ENCODE measurements at regions of chr13 and their contacts with region 1.

Region 1: DNA sequence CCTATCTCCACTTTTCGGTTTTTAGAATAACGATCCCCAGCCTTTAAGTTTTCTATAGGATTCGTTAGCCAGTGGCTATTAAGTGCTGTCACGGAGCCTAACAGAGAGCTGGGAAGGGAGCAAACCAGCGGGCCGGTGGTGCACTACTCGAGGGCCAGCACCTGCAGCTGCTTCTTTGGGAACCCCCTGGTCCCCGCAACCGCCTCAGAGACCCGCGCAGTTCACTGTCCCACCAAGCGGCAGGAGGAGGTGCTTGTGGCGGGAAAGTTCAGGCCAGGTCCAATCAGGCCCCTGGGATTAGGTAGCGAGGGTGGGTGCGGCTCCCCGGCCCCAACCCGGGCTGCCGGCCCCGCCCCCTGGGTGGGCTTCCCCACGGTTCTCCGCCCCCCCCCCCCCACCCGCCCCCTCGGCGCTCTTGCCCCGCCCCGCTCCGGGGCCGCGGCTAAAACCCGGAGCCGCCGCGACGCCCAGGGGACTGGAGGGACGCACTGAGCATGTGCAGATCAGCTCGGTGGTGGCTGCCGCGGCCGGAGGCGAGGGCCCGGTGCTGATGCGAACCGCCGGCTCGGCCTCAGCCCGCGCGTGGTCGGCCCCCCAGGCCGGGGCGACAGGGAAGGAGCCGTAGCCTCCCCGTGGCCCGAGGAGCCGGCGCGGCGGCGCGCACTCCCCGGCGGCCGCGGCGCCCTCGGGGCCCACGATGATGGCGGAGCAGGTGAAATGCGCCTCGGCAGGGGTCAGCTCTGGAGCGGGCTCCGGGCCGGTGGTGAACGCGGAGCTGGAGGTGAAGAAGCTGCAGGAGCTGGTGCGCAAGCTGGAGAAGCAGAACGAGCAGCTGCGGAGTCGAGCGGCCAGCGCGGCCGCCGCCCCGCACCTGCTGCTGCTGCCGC is at the start of gene SLAIN1:
- DNase-seq: peak; percentile 71
- H3K4me3 Mint-ChIP-seq: peak within 1 kb of the TSS; percentile 95
- H3K27ac Mint-ChIP-seq: peak within 1 kb of the TSS; percentile 47
- H3K4me1 Mint-ChIP-seq: peaks cover 38% of the 10 kb centered on the region
- H3K27me3 Mint-ChIP-seq: peaks cover 26% of the 10 kb centered on the region
- total RNA-seq, gene SLAIN1: 36.3 and 43.3 TPM in 2 replicates

Region 2: GRCh38 chr13:77026818-77027585 is 670.5 kb before region 1 on chr13 and contains the start of gene FBXL3:
- intact Hi-C with region 1: loop called (anchors 1 kb)
- DNase-seq: peak; percentile 78
- H3K4me3 Mint-ChIP-seq: peak within 1 kb of the TSS; percentile 94
- H3K27ac Mint-ChIP-seq: peak within 1 kb of the TSS; percentile 93
- H3K4me1 Mint-ChIP-seq: peaks cover 58% of the 10 kb centered on the region
- H3K27me3 Mint-ChIP-seq: no peaks in the 10 kb centered on the region
- total RNA-seq, gene FBXL3: 40.1 and 40.8 TPM in 2 replicates

Region 3: DNA sequence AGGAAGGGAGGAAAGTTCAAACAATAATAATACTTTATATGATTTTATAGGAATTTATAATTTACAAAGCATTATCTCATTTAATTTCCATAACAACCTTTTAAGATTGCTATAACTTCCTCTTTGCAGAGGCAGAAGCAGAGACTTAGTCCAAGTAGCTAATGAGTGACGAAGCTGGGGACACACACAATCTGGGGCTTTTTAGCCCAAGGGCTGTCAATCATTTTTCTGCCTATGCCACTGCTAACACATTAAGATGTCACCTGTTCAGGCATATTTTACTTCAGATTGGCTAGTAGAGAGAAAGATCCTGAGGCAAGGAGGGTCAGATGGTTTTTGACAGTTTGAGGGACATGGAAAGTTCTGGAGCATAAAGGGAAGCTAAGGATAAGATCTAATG is 149.4 kb before region 1 on chr13:
- intact Hi-C with region 1: no loop called
- DNase-seq: no peak
- H3K4me3 Mint-ChIP-seq: no peak overlapping the region
- H3K27ac Mint-ChIP-seq: no peak overlapping the region
- H3K4me1 Mint-ChIP-seq: no peaks in the 10 kb centered on the region
- H3K27me3 Mint-ChIP-seq: no peaks in the 10 kb centered on the region

Region 4: DNA sequence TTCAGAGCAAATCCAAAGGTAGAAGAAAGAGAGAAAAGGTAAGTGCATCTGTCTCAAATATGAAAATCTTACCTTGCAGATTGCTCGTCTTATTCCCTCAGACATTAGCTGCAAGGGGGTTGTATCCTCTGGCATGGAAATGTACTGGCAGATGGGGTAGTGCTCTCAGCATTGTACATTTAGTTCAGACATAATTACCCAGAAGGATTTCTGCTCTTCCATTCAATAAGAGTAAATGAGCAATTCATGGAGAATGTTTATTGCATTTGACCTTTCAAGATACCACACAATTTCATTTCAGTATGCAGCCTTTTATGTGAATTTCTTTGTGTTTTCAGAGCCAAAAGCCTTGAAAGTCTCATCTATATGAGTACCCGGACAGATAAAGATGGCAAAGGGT is 98.1 kb before region 1 on chr13:
- intact Hi-C with region 1: loop called (anchors 5 kb)
- DNase-seq: no peak
- H3K4me3 Mint-ChIP-seq: no peak overlapping the region
- H3K27ac Mint-ChIP-seq: no peak overlapping the region
- H3K4me1 Mint-ChIP-seq: no peaks in the 10 kb centered on the region
- H3K27me3 Mint-ChIP-seq: peaks cover 21% of the 10 kb centered on the region

Region 5: GRCh38 chr13:77729502-77730221 is 32.2 kb after region 1 on chr13:
- intact Hi-C with region 1: loop called (anchors 1 kb)
- DNase-seq: peak; percentile 54
- H3K4me3 Mint-ChIP-seq: peak overlapping the region; percentile 59
- H3K27ac Mint-ChIP-seq: peak overlapping the region; percentile 78
- H3K4me1 Mint-ChIP-seq: peaks cover 50% of the 10 kb centered on the region
- H3K27me3 Mint-ChIP-seq: no peaks in the 10 kb centered on the region

Region 6: GRCh38 chr13:77751513-77752456 is 54.3 kb after region 1 on chr13:
- intact Hi-C with region 1: loop called (anchors 1 kb)
- DNase-seq: peak; percentile 44
- H3K4me3 Mint-ChIP-seq: no peak overlapping the region
- H3K27ac Mint-ChIP-seq: peak overlapping the region; percentile 42
- H3K4me1 Mint-ChIP-seq: peaks cover 18% of the 10 kb centered on the region
- H3K27me3 Mint-ChIP-seq: no peaks in the 10 kb centered on the region